CD8-positive, alpha-beta T cell (primary cell): ENCODE measurements at regions of chr9 and their contacts with region 1.

Region 1: GRCh38 chr9:111467778-111468367 is 16.3 kb downstream of the ECPAS start:
- DNase-seq: no peak
- ATAC-seq: no peak
- H3K4me3 ChIP-seq: no peak overlapping the region
- H3K4me3 Mint-ChIP-seq: no peak overlapping the region
- H3K27ac ChIP-seq: no peak overlapping the region
- H3K27ac Mint-ChIP-seq: no peak overlapping the region
- H3K4me1 ChIP-seq: no peaks in the 10 kb centered on the region
- H3K4me1 Mint-ChIP-seq: peaks cover 47% of the 10 kb centered on the region
- H3K27me3 ChIP-seq: no peaks in the 10 kb centered on the region
- H3K27me3 Mint-ChIP-seq: no peaks in the 10 kb centered on the region
- CTCF ChIP-seq: no peak

Region 2: DNA sequence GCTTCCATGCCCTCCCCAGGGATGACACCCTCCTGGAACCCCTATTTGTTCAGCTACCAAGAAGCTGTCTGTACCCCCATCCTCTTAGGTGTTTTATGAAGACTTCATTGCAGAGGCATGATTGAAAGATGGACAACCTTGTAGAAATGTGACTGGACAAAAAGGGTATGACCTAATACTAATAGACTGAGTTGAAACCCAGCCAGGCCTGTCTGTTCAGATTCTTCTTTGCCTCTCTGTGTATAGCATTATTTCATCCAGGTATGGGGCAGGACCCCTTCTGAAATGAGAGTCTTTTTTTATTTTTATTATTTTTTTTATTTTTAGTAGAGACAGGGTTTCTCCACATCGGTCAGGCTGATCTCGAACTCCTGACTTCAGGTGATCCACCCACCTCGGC is 23.5 kb after region 1 on chr9:
- CTCF ChIA-PET with region 1: no interaction called
- POLR2A ChIA-PET with region 1: no interaction called
- intact Hi-C with region 1: no loop called
- DNase-seq: no peak
- ATAC-seq: no peak
- H3K4me3 ChIP-seq: no peak overlapping the region
- H3K4me3 Mint-ChIP-seq: no peak overlapping the region
- H3K27ac ChIP-seq: no peak overlapping the region
- H3K27ac Mint-ChIP-seq: no peak overlapping the region
- H3K4me1 ChIP-seq: no peaks in the 10 kb centered on the region
- H3K4me1 Mint-ChIP-seq: no peaks in the 10 kb centered on the region
- H3K27me3 ChIP-seq: no peaks in the 10 kb centered on the region
- H3K27me3 Mint-ChIP-seq: peaks cover 6% of the 10 kb centered on the region
- CTCF ChIP-seq: no peak

Region 3: GRCh38 chr9:111516061-111516465 is 48.2 kb after region 1 on chr9:
- CTCF ChIA-PET with region 1: no interaction called
- POLR2A ChIA-PET with region 1: no interaction called
- intact Hi-C with region 1: loop called in 1 of 2 experiments (anchors 2 kb)
- DNase-seq: no peak
- ATAC-seq: no peak
- H3K4me3 ChIP-seq: no peak overlapping the region
- H3K4me3 Mint-ChIP-seq: no peak overlapping the region
- H3K27ac ChIP-seq: no peak overlapping the region
- H3K27ac Mint-ChIP-seq: no peak overlapping the region
- H3K4me1 ChIP-seq: no peaks in the 10 kb centered on the region
- H3K4me1 Mint-ChIP-seq: no peaks in the 10 kb centered on the region
- H3K27me3 ChIP-seq: no peaks in the 10 kb centered on the region
- H3K27me3 Mint-ChIP-seq: peaks cover 4% of the 10 kb centered on the region
- CTCF ChIP-seq: no peak

Region 4: DNA sequence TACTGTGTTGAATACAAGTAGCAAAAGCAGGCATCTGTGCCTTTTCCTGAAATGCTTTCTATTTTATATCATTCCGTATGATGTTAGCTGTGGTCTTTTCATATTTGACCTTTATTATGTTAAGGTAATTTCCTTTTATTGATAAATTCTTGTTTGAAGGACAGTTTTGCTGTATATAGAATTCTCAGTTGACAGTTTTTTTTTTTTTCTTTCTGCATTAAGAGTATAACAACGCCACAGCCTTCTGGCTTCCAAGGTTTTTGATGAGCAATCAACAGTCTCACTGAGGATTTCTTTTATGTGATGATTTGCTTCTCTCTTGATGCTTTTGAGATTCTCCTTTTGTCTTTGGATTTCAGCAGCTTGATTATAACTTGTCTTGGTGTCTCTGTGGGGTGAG is 80.8 kb after region 1 on chr9:
- CTCF ChIA-PET with region 1: no interaction called
- POLR2A ChIA-PET with region 1: no interaction called
- intact Hi-C with region 1: no loop called
- DNase-seq: no peak
- ATAC-seq: no peak
- H3K4me3 ChIP-seq: no peak overlapping the region
- H3K4me3 Mint-ChIP-seq: no peak overlapping the region
- H3K27ac ChIP-seq: no peak overlapping the region
- H3K27ac Mint-ChIP-seq: no peak overlapping the region
- H3K4me1 ChIP-seq: no peaks in the 10 kb centered on the region
- H3K4me1 Mint-ChIP-seq: no peaks in the 10 kb centered on the region
- H3K27me3 ChIP-seq: no peaks in the 10 kb centered on the region
- H3K27me3 Mint-ChIP-seq: no peaks in the 10 kb centered on the region
- CTCF ChIP-seq: no peak